BJ (cell line): ENCODE measurements at regions of chr10 and their contacts with region 1.

Region 1: GRCh38 chr10:91901784-91902677 is 7.3 kb downstream of the FGFBP3 start:
- DNase-seq: peak; percentile 84
- H3K4me3 ChIP-seq: no peak overlapping the region
- H3K27me3 ChIP-seq: no peaks in the 10 kb centered on the region; the same call in 1 of the 2 replicates
- CTCF ChIP-seq: no peak

Region 2: DNA sequence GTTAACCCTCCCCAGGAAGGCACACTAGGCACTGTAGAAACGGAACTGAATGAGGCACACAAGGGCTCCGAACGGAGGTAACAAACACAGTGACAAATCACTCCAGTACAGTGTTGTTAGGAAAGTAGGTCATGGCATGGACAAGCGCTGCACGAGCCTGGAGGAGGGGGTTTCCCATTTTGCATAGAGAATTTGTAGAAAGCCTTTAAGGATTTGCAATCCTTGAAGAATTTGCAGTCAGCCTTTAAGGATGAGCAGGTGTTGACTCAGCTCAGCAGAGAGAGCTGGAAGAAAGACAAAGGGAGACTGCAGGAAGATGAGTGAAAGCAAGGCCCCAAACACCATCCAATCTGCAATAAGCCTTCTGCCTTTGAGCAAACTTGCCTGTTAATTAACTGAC is 218.1 kb before region 1 on chr10:
- CTCF ChIA-PET with region 1: no interaction called
- POLR2A ChIA-PET with region 1: interaction called, 12 read pairs
- DNase-seq: peak; percentile 51
- H3K4me3 ChIP-seq: no peak overlapping the region
- H3K27me3 ChIP-seq: no peaks in the 10 kb centered on the region
- CTCF ChIP-seq: no peak